IMR-90 (cell line): ENCODE measurements at regions of chr20 and their contacts with region 1.

Region 1: DNA sequence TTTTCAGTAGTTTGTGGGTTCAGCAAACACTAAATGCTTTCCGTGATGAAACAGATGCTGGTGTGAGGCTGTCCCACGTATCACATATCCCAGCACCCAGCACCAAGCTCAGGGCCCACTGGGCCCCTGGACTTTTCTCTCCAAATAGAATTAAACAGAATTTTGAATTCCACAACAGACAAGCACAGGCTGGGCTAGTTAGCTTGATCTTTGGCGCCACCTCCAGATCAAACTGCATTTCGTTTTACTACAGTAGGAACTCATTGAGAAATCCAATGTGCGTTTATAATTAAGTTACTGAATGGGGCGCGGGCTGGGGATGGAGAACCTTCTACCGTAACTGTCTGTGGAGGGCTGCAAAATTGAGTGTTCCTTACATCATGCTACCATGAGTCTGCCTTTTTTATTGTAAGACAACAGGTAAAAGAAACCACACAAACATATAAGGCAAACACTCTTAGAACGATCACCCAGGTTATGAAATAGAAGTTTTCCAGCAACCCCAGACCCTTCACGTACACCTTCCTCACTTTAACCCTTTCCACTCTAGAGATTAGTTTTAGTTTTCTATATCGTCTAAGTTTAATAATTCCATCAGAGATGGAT is 107.8 kb downstream of the ZFP64 start:
- DNase-seq: peak; percentile 75
- ATAC-seq: peak; percentile 92
- H3K4me3 ChIP-seq: no peak overlapping the region
- H3K27ac ChIP-seq: no peak overlapping the region
- H3K4me1 ChIP-seq: no peaks in the 10 kb centered on the region
- H3K27me3 ChIP-seq: no peaks in the 10 kb centered on the region
- CTCF ChIP-seq: peak; percentile 88
- POLR2A ChIP-seq: 0 out of 2 replicates have a peak, but pooled peaks have one; percentile 36
- RAD21 ChIP-seq: peak; percentile 98

Region 2: DNA sequence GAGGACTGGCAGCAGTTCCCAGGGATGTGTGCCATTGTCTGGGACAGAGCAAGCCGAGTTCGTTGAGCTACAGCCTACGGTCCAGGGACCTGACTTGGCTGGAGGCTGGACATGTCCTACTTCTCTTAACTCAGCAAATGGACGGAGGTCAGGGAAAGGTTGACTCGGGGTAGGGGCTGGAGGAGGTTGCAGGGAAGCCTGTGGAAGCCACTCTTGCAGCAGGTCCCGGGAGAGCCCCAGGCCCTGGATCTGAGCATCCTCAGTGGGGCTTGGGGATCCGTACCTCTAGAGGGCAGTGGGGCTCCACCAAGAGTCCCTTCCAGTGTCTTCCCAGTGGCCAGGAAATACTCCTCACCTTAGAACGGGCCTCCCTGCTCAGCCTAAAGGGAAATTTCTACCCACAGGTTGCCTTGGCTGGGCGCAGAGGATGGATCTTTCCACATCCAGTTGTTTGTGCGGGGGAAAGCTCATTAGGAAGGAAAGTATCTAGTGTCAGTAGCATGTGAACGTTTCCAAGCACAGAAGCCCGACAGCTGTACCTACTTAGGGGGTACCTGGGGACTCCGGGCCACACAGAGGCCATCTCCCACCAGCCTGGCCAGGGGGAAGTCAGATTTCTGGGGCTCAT is 711.4 kb before region 1 on chr20:
- CTCF ChIA-PET with region 1: interaction called, 6 read pairs
- POLR2A ChIA-PET with region 1: no interaction called
- dilution Hi-C with region 1: no loop called
- in situ Hi-C with region 1: loop called (anchors 5 kb)
- intact Hi-C with region 1: loop called (anchors 2 kb)
- DNase-seq: peak; percentile 74
- ATAC-seq: peak; percentile 98
- H3K4me3 ChIP-seq: no peak overlapping the region
- H3K27ac ChIP-seq: no peak overlapping the region; the same call in 1 of the 2 replicates
- H3K4me1 ChIP-seq: peaks cover 7% of the 10 kb centered on the region
- H3K27me3 ChIP-seq: no peaks in the 10 kb centered on the region
- CTCF ChIP-seq: peak; percentile 94
- POLR2A ChIP-seq: peak; percentile 48
- RAD21 ChIP-seq: peak; percentile 97

Region 3: DNA sequence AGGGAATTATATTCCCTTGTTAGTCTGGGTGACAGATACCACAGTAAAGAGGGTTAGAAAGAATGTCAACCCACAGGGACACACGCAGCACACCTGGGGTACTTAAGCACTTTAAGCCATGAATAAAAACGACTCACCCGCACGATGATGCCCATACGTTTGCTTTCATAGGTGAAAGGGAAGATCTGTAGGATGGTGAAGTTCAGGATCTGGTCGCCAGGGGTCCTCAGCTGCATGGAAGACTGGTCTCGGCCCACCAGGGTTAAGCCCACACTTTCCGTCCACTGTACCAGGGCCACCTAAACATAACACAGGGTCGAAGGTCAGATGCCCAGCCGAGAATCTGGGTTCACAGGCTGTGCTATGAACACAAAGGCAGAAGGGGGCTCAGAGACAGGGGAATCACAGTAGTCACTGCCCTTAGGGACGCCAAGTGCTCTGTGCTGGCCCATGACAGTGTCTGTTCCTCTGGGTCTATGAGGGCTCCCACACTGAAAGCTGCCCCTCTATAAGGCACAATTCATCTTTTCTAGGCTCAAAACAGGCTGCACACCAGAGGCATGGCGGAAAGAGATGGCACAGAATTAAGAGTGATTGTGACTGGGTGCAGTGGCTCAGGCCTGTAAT is 444.4 kb before region 1 on chr20:
- CTCF ChIA-PET with region 1: interaction called, 3 read pairs
- POLR2A ChIA-PET with region 1: no interaction called
- dilution Hi-C with region 1: no loop called
- in situ Hi-C with region 1: loop called (anchors 5 kb)
- intact Hi-C with region 1: loop called (anchors 1 kb)
- DNase-seq: peak; percentile 70
- ATAC-seq: peak; percentile 81
- H3K4me3 ChIP-seq: no peak overlapping the region
- H3K27ac ChIP-seq: no peak overlapping the region
- H3K4me1 ChIP-seq: peaks cover 14% of the 10 kb centered on the region
- H3K27me3 ChIP-seq: no peaks in the 10 kb centered on the region
- CTCF ChIP-seq: peak; percentile 79
- POLR2A ChIP-seq: 0 out of 2 replicates have a peak, but pooled peaks have one; percentile 45
- RAD21 ChIP-seq: peak; percentile 89

Region 4: GRCh38 chr20:51767010-51767558 is 316.6 kb before region 1 on chr20:
- CTCF ChIA-PET with region 1: no interaction called
- POLR2A ChIA-PET with region 1: no interaction called
- dilution Hi-C with region 1: no loop called
- in situ Hi-C with region 1: no loop called
- intact Hi-C with region 1: loop called (anchors 2 kb)
- DNase-seq: no peak
- ATAC-seq: peak; percentile 39
- H3K4me3 ChIP-seq: peak overlapping the region; percentile 76
- H3K27ac ChIP-seq: no peak overlapping the region
- H3K4me1 ChIP-seq: no peaks in the 10 kb centered on the region
- H3K27me3 ChIP-seq: no peaks in the 10 kb centered on the region
- CTCF ChIP-seq: no peak
- POLR2A ChIP-seq: no peak
- RAD21 ChIP-seq: no peak

Region 5: DNA sequence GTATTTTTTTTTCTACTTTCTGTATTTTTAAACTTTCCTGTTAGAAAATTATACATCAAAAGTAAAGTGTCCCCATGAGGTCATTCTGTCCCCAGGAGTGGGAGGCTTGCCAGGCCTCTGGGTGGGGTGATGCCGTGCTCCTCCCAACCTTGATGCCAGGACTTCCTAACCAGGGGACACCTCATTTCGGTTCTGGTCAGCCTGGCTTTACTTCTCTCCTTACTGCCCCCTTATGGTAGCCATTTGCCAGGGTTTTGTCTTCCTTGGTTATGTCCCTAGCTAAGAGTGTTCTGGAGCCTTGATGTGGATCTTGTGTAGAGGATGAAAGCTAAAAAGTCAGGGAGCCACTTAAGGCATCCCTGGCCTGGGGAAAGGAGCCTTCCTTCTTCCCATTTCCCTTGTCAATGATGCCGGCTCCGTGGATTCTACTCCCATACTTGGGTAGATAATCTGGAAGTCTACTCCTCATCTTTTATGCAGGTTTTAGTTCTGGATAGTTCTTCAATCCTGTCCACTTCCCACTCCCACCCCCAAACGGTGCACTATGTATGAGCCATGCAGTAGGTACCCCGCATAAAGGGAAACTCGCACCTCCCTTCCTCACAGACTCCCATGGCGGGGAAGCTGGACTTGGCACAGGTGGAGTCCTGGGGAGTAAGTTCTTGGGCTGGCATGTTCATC is 117.3 kb before region 1 on chr20:
- CTCF ChIA-PET with region 1: no interaction called
- POLR2A ChIA-PET with region 1: no interaction called
- dilution Hi-C with region 1: no loop called
- in situ Hi-C with region 1: no loop called
- intact Hi-C with region 1: loop called (anchors 5 kb)
- DNase-seq: peak; percentile 63
- ATAC-seq: peak; percentile 90
- H3K4me3 ChIP-seq: no peak overlapping the region
- H3K27ac ChIP-seq: no peak overlapping the region
- H3K4me1 ChIP-seq: peaks cover 7% of the 10 kb centered on the region; the same call in 1 of the 2 replicates
- H3K27me3 ChIP-seq: no peaks in the 10 kb centered on the region
- CTCF ChIP-seq: peak; percentile 60
- POLR2A ChIP-seq: no peak
- RAD21 ChIP-seq: peak; percentile 56

Region 6: DNA sequence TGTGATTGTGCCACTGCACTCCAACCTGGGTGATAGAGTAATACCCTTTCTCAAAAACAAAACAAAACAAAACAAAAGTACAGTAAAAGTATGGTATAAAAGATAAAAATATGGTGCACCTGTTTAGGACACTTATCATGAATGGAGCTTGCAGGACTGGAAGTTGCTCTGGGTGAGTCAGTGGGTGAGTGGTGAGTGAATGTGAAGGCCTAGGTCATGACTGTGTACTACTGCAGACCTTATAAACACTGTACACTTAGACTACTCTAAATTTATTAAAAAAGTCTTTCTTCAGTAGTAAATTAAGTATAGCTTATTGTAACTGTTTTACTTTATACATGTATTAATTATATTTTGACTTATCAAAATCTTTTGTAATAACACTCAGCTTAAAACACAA is 61.9 kb after region 1 on chr20:
- CTCF ChIA-PET with region 1: no interaction called
- POLR2A ChIA-PET with region 1: no interaction called
- dilution Hi-C with region 1: no loop called
- in situ Hi-C with region 1: no loop called
- intact Hi-C with region 1: no loop called
- DNase-seq: peak; percentile 28
- ATAC-seq: no peak; the same call in 1 of the 2 replicates
- H3K4me3 ChIP-seq: no peak overlapping the region
- H3K27ac ChIP-seq: no peak overlapping the region
- H3K4me1 ChIP-seq: no peaks in the 10 kb centered on the region
- H3K27me3 ChIP-seq: no peaks in the 10 kb centered on the region
- CTCF ChIP-seq: no peak
- POLR2A ChIP-seq: no peak
- RAD21 ChIP-seq: no peak